Activated CD4-positive, alpha-beta memory T cell treated with anti-CD3 and anti-CD28 coated beads, Interleukin-2, amount 10 ng/mL, durations not matched to agents 7 days and 5 days (primary cell): ENCODE measurements at regions of chr1 and their contacts with region 1.

Region 1: GRCh38 chr1:16440470-16441281 is at the start of gene NECAP2:
- DNase-seq: peak; percentile 94
- H3K4me3 Mint-ChIP-seq: peak within 1 kb of the TSS; percentile 91
- H3K27ac Mint-ChIP-seq: peak within 1 kb of the TSS; percentile 88
- H3K4me1 Mint-ChIP-seq: peaks cover 49% of the 10 kb centered on the region
- H3K27me3 Mint-ChIP-seq: no peaks in the 10 kb centered on the region
- total RNA-seq, gene NECAP2: 123 to 132 TPM

Region 2: DNA sequence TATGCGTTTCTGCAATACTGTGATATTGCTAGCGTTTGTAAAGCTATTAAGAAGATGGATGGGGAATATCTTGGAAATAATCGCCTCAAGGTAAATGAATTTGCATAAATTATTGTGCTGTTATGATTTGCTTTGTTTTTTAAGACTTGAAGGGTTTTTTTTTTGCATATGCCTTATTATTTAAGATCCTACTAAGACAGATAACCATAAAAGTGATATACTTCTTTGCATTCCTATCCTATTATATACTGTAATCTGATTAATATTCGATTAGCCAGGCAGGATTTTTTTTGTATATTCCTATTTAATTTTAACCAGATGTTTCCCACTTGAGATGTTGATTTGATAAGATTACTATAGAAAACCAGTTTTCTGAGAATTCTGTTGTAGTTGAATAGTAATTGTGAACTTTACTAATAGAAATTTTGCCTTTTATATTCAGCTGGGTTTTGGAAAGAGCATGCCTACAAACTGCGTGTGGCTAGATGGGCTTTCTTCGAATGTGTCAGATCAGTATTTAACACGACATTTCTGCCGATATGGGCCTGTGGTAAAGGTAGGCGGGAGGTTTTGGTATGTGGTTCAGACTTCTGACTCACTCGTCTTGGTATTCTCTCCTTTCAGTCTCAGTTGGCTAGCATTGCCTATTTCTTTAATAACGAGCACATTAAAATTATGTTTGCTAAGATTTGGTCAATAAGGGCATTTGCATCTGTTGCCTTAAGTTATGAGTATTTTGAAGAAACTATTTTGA is 521.5 kb before region 1 on chr1:
- CTCF ChIA-PET with region 1: no interaction called
- POLR2A ChIA-PET with region 1: no interaction called
- DNase-seq: peak; percentile 83
- H3K4me3 Mint-ChIP-seq: no peak overlapping the region
- H3K27ac Mint-ChIP-seq: peak overlapping the region; percentile 24
- H3K4me1 Mint-ChIP-seq: peaks cover 41% of the 10 kb centered on the region
- H3K27me3 Mint-ChIP-seq: no peaks in the 10 kb centered on the region

Region 3: GRCh38 chr1:16300436-16300835 is 140.2 kb before region 1 on chr1:
- CTCF ChIA-PET with region 1: no interaction called
- POLR2A ChIA-PET with region 1: no interaction called
- DNase-seq: no peak
- H3K4me3 Mint-ChIP-seq: no peak overlapping the region
- H3K27ac Mint-ChIP-seq: no peak overlapping the region
- H3K4me1 Mint-ChIP-seq: no peaks in the 10 kb centered on the region
- H3K27me3 Mint-ChIP-seq: no peaks in the 10 kb centered on the region

Region 4: GRCh38 chr1:16366722-16367257 is 73.9 kb before region 1 on chr1 and contains the start of gene SZRD1:
- CTCF ChIA-PET with region 1: interaction called, 4 read pairs
- POLR2A ChIA-PET with region 1: interaction called, 31 read pairs
- DNase-seq: peak; percentile 98
- H3K4me3 Mint-ChIP-seq: peak within 1 kb of the TSS; percentile 97
- H3K27ac Mint-ChIP-seq: peak within 1 kb of the TSS; percentile 99
- H3K4me1 Mint-ChIP-seq: peaks cover 44% of the 10 kb centered on the region
- H3K27me3 Mint-ChIP-seq: no peaks in the 10 kb centered on the region
- total RNA-seq, gene SZRD1: 156 to 157 TPM

Region 5: GRCh38 chr1:16386454-16387113 is 54.1 kb before region 1 on chr1:
- CTCF ChIA-PET with region 1: interaction called, 4 read pairs
- POLR2A ChIA-PET with region 1: interaction called, 10 read pairs
- DNase-seq: no peak
- H3K4me3 Mint-ChIP-seq: peak overlapping the region; percentile 5
- H3K27ac Mint-ChIP-seq: peak overlapping the region; percentile 23
- H3K4me1 Mint-ChIP-seq: peaks cover 66% of the 10 kb centered on the region
- H3K27me3 Mint-ChIP-seq: no peaks in the 10 kb centered on the region

Region 6: DNA sequence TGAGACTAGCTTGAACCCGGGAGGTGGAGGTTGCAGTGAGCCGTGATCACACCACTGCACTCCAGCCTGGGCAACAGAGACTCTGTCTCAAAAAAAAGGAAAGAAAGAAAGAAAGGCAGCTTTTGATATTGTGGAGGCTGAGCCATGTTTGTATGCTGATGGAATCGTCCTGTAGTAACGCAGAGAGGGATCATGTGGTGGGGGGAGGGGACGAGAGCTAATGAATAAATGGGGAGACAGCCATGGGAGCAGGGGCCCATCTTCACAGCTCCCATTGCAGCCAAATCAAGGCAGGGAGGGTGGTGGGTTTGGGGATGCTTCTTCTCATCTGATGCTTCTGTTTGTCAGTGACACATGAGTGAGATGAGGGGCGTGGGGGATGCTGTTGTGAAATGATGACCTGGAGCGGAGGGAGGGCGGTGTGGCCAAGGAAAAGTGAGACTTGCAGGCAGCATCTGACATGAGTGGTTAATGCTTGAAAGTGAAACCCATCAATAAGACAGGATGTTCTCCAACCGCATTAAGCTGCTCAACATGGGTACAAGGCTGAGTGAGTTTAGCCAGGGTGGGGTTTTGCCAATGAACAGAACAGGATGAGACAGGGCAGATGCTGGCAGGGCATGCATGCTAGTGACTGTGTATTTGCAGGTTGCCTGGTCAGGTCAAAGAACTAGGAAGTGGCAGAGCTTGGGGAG is 20.1 kb before region 1 on chr1:
- CTCF ChIA-PET with region 1: interaction called, 15 read pairs
- POLR2A ChIA-PET with region 1: interaction called, 36 read pairs
- DNase-seq: peak; percentile 76
- H3K4me3 Mint-ChIP-seq: peak overlapping the region; percentile 38
- H3K27ac Mint-ChIP-seq: peak overlapping the region; percentile 94
- H3K4me1 Mint-ChIP-seq: peaks cover 38% of the 10 kb centered on the region
- H3K27me3 Mint-ChIP-seq: peaks cover 12% of the 10 kb centered on the region

Region 7: DNA sequence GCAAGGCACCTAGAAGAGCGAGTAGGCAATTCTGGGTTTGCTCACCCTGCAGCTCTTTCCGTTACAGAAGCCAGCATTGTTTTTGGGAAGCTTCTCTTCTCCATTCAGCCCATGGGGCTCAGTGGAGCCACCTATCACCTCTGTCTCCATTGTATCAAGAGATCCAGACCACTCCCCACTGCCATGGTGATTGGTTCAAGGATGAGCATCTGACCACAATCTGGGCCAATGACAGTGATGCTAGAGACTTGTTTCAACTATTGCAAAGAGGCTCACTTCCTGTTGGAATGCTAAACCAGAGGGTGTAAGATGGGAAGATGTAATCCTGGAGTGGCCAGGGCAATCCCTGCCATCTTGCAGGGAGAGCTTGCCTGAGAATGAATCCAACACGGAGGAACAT is 10.1 kb before region 1 on chr1:
- CTCF ChIA-PET with region 1: interaction called, 13 read pairs
- POLR2A ChIA-PET with region 1: interaction called, 8 read pairs
- DNase-seq: no peak
- H3K4me3 Mint-ChIP-seq: no peak overlapping the region
- H3K27ac Mint-ChIP-seq: no peak overlapping the region
- H3K4me1 Mint-ChIP-seq: peaks cover 2% of the 10 kb centered on the region
- H3K27me3 Mint-ChIP-seq: peaks cover 18% of the 10 kb centered on the region

Region 8: DNA sequence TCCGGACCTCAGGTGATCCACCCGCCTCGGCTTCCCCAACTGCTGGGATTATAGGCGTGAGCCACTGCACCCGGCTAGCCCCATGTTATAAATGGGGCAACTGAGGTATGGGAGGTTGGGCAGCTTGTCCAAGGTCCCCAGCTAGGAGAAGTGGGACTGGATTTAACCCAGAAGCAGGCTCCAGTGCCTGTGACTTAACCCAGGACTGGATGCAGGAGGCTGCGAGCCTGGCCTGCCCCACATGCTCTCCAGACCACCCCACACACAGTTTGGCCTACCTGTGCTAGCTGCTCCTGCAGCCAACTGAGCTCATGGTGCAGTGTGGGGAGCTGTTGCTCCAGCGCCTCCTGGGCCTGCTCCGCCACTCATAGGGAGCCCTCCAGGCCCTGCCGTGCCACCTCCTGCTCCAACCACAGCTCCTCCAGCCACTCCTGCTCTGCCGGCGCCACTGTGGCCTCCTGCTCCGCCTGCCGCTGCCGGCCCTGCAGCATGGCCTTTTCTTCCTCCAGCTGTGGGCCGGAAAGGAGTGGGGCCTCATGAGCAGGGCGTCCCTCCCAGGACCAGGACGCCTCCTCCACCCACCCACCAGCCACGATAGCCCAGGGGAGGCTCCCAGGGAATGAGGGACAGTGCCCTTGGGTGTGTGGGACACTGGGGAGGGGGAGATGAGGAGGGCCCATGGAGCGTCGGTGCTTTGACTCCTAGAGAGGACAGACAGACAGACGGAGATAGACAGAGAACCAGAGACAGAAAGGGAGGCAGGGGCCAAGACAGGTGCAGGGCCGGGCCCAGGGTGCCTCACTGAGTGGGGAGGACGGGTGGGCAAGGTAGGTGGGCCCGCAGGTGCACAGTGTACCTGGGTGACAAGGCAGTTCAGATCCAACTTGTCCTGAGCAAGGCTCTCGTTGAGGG is 185.1 kb after region 1 on chr1:
- CTCF ChIA-PET with region 1: interaction called, 13 read pairs
- POLR2A ChIA-PET with region 1: no interaction called
- DNase-seq: no peak
- H3K4me3 Mint-ChIP-seq: no peak overlapping the region
- H3K27ac Mint-ChIP-seq: no peak overlapping the region
- H3K4me1 Mint-ChIP-seq: peaks cover 3% of the 10 kb centered on the region
- H3K27me3 Mint-ChIP-seq: no peaks in the 10 kb centered on the region

Region 9: DNA sequence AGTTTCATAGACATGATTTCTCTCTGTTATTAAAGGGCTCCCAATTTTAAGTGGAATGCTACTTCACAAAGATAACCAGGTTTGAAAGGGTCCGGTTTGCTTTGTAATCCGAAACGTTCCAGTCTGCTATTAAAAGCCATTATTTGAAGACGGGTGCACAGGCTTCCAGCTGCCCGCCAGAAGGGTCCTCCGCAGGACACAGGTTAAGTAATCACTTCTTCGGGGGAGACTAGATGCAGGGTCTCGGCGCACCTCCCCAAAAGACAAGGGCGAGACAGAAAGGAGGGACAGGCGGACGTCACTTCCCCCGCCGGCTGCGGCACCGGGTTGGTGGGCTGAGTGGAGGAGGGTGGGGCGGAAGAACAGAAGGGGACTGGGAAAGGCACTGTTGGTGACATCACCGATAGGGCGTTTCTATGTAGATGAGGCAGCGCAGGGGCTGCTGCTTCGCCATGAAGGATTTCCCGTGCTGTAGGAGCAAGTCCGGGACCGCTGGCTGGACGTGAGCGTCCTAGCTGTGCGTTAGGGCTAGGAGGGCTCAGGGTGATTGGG is 464.0 kb after region 1 on chr1:
- CTCF ChIA-PET with region 1: no interaction called
- POLR2A ChIA-PET with region 1: interaction called, 13 read pairs
- DNase-seq: peak; percentile 99
- H3K4me3 Mint-ChIP-seq: no peak overlapping the region
- H3K27ac Mint-ChIP-seq: no peak overlapping the region
- H3K4me1 Mint-ChIP-seq: peaks cover 27% of the 10 kb centered on the region
- H3K27me3 Mint-ChIP-seq: peaks cover 6% of the 10 kb centered on the region